ENCODE measurements at regions of chr2 and their contacts with region 1.

Region 1: GRCh38 chr2:237674731-237675276 is 47.4 kb downstream of the LRRFIP1 start:
- DNase-seq: peak; percentile 86
- H3K4me3 ChIP-seq: peak overlapping the region; percentile 49
- H3K27ac ChIP-seq: peak overlapping the region; percentile 89
- H3K4me1 ChIP-seq: peaks cover 53% of the 10 kb centered on the region
- H3K27me3 ChIP-seq: no peaks in the 10 kb centered on the region

Region 2: DNA sequence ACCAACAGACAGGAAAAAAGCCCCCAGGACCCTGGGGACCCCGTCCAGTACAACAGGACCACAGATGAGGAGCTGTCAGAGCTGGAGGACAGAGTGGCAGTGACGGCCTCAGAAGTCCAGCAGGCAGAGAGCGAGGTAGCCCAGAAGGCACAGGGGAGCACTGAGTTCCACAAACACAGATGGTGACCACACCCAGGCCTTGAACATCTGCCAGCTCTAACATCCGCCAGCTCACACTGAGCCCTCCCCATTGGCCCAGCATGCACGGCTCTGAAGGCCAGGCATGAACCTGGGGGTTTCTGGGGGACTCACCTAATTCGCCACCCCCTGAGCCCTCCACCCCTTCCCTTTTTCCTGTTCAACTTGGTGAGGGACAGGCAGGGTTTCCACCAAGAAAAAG is 134.0 kb before region 1 on chr2:
- in situ Hi-C with region 1: no loop called
- DNase-seq: peak; percentile 70
- H3K4me3 ChIP-seq: no peak overlapping the region
- H3K27ac ChIP-seq: no peak overlapping the region
- H3K4me1 ChIP-seq: 0 out of 2 replicates have a peak, but pooled peaks cover 5% of the 10 kb centered on the region
- H3K27me3 ChIP-seq: no peaks in the 10 kb centered on the region

Region 3: DNA sequence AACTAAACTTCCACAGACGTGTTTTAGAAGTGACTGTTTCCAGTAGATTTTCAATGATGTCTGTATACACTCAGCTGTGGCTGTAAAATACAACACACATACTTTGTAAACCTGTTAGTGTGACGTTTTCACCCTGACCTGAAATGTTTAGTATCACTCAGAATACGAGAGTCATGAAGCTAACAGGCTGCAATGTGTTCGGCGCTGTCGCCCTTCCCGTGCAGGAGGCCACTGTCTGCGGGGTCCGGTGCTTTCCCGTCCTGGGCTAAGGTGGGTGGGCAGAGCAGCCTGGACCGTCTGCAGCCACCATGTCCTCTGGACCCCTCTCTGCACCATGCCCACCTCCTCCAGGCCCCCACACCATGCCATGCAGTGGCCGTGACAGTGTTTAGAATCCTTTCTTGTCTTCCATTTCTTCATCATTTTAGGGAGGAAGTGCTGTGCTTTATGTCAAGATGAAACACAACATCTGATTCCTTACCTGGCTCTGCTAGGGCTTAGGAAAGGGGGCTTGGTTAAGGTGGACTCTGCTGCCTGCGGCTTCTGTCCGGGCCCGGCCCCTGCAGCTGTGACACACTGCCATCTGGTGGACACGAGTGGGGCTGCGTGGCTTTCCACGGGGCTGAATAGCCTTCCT is 69.9 kb after region 1 on chr2:
- in situ Hi-C with region 1: loop called (anchors 10 kb)
- DNase-seq: peak; percentile 72
- H3K4me3 ChIP-seq: no peak overlapping the region
- H3K27ac ChIP-seq: 0 out of 2 replicates have a peak overlapping the region, but pooled peaks have one; percentile 26
- H3K4me1 ChIP-seq: peaks cover 12% of the 10 kb centered on the region
- H3K27me3 ChIP-seq: no peaks in the 10 kb centered on the region

Measured in GM23248 (cell line).